ENCODE measurements at regions of chr1 and their contacts with region 1.

Region 1: DNA sequence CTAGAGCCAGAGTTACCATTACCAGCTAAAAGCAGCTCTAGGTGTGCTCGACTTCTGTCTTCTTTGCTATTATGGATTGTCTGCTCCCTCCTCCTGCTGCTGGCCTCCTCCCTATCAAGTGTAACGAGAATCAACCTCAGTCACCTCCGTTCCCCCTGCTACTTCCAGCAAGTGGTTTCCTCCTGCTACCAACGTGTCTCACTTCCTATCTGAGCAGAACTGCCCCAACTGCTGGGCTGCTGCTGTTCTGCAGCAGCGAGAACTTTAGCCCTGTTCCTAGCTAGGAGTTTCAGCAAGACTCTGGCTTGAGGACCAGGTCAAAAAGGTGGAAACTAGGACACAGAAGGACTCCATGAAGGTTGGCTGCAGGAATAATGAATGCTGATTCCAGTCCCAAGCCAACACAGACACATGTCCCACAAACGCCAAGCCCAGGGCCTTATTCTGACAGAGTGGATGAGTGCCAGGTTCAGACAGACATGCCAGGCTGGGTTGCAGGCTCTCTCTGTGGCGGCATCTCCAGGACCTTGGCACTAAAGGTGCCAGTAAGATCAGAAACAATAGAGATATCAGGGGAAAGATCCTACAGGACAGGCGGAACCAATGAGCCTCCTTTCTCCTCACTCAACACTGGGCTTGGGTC is 46.9 kb downstream of the CD34 start:
- DNase-seq: peak; percentile 71
- H3K4me3 Mint-ChIP-seq: peak overlapping the region; percentile 50
- H3K27ac Mint-ChIP-seq: peak overlapping the region; percentile 86
- H3K4me1 Mint-ChIP-seq: peaks cover 65% of the 10 kb centered on the region
- H3K27me3 Mint-ChIP-seq: no peaks in the 10 kb centered on the region

Region 2: GRCh38 chr1:207719234-207719633 is 144.8 kb before region 1 on chr1:
- CTCF ChIA-PET with region 1: no interaction called
- POLR2A ChIA-PET with region 1: no interaction called
- DNase-seq: no peak
- H3K4me3 Mint-ChIP-seq: no peak overlapping the region
- H3K27ac Mint-ChIP-seq: no peak overlapping the region
- H3K4me1 Mint-ChIP-seq: no peaks in the 10 kb centered on the region
- H3K27me3 Mint-ChIP-seq: peaks cover 4% of the 10 kb centered on the region

Region 3: DNA sequence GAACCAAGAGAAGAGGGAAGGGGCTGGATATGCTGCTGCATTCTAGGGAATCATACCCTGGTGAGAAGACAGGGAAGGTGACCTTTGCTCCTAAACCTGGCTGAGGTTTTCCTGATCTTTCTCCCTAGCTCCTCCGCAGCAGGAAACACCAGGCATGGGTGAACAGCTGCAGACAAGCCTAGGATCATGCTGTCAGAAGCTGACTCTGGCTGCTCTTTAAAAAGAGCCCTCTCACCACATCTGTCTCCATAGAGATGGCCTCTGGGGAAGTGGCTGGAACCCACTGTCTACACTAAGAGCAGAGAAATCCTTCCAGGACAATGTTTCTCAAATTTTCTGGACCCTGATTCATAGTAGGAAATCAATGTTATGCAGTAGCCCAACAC is 10.6 kb before region 1 on chr1:
- CTCF ChIA-PET with region 1: interaction called, 20 read pairs
- POLR2A ChIA-PET with region 1: interaction called, 11 read pairs
- DNase-seq: no peak
- H3K4me3 Mint-ChIP-seq: no peak overlapping the region
- H3K27ac Mint-ChIP-seq: no peak overlapping the region
- H3K4me1 Mint-ChIP-seq: peaks cover 70% of the 10 kb centered on the region
- H3K27me3 Mint-ChIP-seq: no peaks in the 10 kb centered on the region

Region 4: GRCh38 chr1:207876131-207876530 is 12.1 kb after region 1 on chr1:
- CTCF ChIA-PET with region 1: interaction called, 423 read pairs
- POLR2A ChIA-PET with region 1: interaction called, 44 read pairs
- DNase-seq: no peak
- H3K4me3 Mint-ChIP-seq: no peak overlapping the region
- H3K27ac Mint-ChIP-seq: no peak overlapping the region
- H3K4me1 Mint-ChIP-seq: peaks cover 59% of the 10 kb centered on the region
- H3K27me3 Mint-ChIP-seq: no peaks in the 10 kb centered on the region

Region 5: GRCh38 chr1:207910591-207911354 is 46.8 kb after region 1 on chr1 and contains the start of gene CD34:
- CTCF ChIA-PET with region 1: no interaction called
- POLR2A ChIA-PET with region 1: no interaction called
- DNase-seq: peak; percentile 28
- H3K4me3 Mint-ChIP-seq: peak within 1 kb of the TSS; percentile 42
- H3K27ac Mint-ChIP-seq: no peak within 1 kb of the TSS
- H3K4me1 Mint-ChIP-seq: peaks cover 16% of the 10 kb centered on the region
- H3K27me3 Mint-ChIP-seq: peaks cover 63% of the 10 kb centered on the region
- total RNA-seq, gene CD34: 0.03 to 0.05 TPM